ENCODE measurements at regions of chr2 and their contacts with region 1.

Region 1: DNA sequence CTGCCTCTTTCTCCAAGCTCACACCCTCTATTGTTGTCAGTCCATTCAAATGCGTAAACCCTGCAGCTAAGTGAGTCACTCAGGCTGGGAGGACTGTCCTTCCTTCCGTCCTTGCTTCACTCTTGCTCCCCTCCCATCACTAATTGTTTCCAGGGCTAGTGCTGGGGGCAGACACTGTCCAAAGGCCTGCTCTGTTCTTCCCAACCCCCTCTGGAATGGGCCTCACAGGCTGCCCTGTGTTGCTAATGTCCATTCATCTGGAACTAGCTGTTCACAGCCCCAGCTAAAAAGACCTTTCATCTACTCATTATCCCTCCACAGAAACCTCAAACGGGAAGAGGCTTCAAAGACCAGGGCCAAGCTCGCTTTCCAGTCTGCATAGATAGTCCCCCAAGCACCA is 31.9 kb upstream of the NRP2 start:
- DNase-seq: no peak
- ATAC-seq: no peak
- H3K4me3 Mint-ChIP-seq: no peak overlapping the region
- H3K27ac Mint-ChIP-seq: no peak overlapping the region
- H3K4me1 Mint-ChIP-seq: peaks cover 9% of the 10 kb centered on the region
- H3K27me3 Mint-ChIP-seq: peaks cover 27% of the 10 kb centered on the region
- CTCF ChIP-seq: no peak

Region 2: DNA sequence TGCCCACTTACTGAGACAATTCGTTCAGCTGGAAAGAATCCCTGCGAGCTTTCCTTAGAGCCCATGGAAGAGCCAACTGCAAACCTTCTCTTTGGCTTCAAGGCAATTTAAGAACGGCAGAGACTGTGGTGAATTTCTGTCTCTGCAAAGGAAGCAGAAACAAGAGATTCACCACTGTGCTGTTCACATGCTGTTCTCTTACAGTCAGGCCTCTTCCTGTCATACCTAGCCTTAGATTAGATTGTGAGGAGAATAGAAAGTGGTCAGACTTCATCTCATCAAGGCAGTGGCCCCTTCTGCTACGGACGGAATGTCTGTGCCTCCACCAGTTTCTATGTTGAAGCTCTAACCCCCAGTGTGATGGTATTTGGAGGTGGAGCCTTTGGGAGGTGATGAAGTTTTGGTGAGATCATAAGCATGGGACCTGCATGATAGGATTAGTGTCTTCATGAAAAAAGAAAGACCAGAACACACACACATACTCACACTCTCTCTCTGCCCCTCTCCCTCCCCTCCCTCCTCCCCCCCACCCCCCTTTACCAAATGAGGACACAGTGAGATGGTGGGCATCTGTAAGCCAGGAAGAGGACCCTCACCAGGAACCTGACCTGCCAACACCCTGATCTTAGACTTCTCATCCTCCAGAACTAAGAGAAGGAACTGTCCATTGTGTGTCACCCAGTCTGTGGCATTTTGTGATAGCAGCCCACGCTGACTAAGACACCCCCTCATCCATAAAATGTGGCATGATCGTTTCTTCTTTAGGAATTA is 13.7 kb before region 1 on chr2:
- CTCF ChIA-PET with region 1: no interaction called
- POLR2A ChIA-PET with region 1: interaction called, 13 read pairs
- intact Hi-C with region 1: no loop called
- DNase-seq: no peak
- ATAC-seq: no peak
- H3K4me3 Mint-ChIP-seq: no peak overlapping the region
- H3K27ac Mint-ChIP-seq: no peak overlapping the region
- H3K4me1 Mint-ChIP-seq: no peaks in the 10 kb centered on the region
- H3K27me3 Mint-ChIP-seq: peaks cover 18% of the 10 kb centered on the region
- CTCF ChIP-seq: no peak